AG04449 (cell line): ENCODE measurements at regions of chr11 and their contacts with region 1.

Region 1: GRCh38 chr11:6705905-6706535 is 22.9 kb upstream of the MRPL17 start:
- DNase-seq: no peak
- H3K4me3 ChIP-seq: no peak overlapping the region
- CTCF ChIP-seq: peak; percentile 75

Region 2: GRCh38 chr11:6523253-6523652 is 182.8 kb before region 1 on chr11:
- CTCF ChIA-PET with region 1: interaction called, 13 read pairs
- POLR2A ChIA-PET with region 1: no interaction called
- DNase-seq: no peak
- H3K4me3 ChIP-seq: no peak overlapping the region
- CTCF ChIP-seq: no peak

Region 3: GRCh38 chr11:6619004-6619745 is 86.8 kb before region 1 on chr11 and contains the start of gene TPP1:
- CTCF ChIA-PET with region 1: interaction called, 11 read pairs
- POLR2A ChIA-PET with region 1: no interaction called
- DNase-seq: no peak
- H3K4me3 ChIP-seq: peak within 1 kb of the TSS; percentile 97
- CTCF ChIP-seq: no peak

Region 4: DNA sequence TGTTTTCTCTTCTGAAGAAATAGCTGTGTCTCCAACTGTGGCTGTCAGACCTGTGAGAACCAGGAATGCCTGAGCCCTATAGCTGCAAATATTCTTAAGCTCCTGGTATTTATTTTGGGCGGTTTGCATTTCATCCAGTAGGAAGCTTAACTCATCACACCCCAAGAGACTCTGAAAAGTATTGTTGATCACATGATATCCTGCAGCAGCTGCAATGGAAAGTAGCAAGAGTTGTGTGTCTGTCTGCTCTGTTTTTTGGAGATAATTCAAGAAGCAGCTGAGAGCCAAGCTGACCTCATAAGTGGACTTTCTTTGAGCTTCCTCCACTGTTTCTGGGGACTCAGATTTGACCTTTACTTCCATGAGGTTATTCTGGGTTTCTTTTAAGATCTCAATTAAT is 13.6 kb after region 1 on chr11:
- CTCF ChIA-PET with region 1: interaction called, 18 read pairs
- POLR2A ChIA-PET with region 1: no interaction called
- DNase-seq: no peak
- H3K4me3 ChIP-seq: no peak overlapping the region
- CTCF ChIP-seq: no peak

Region 5: DNA sequence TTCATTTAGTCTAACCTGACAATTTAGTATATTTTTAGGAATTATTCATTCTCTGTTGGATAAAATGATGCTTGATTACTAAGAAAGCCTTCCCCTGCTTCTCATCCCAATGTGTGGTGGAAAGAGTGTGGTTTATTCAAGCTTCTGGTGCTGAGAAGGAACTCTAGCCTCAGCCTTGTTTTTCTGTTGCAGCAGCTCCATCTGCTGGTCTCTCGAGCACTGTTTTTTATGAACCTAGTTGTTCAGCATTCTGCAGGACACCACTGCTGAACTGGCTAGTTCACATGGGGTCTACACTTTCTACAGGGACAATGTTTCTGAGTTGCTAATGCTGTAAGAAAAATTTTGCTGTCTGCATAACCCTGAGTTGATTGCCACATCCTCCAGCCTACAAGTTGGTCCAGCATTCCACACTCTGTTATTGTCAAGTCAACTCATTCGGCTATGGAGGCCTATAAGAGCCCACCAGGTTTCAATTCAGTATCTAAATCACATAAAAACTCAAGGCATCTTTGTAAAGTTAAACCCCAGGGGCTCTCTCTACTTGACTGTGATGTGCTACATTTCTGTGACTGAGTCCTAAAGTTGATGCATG is 51.5 kb after region 1 on chr11:
- CTCF ChIA-PET with region 1: interaction called, 58 read pairs
- POLR2A ChIA-PET with region 1: no interaction called
- DNase-seq: peak; percentile 12
- H3K4me3 ChIP-seq: no peak overlapping the region
- CTCF ChIP-seq: peak; percentile 62